ENCODE measurements at regions of chr5 and their contacts with region 1.

Region 1: GRCh38 chr5:126651013-126651577 is 50.3 kb downstream of the PHAX start:
- DNase-seq: no peak
- H3K4me3 ChIP-seq: no peak overlapping the region
- H3K4me3 Mint-ChIP-seq: no peak overlapping the region
- H3K27ac Mint-ChIP-seq: no peak overlapping the region
- H3K4me1 ChIP-seq: peaks cover 21% of the 10 kb centered on the region
- H3K4me1 Mint-ChIP-seq: peaks cover 20% of the 10 kb centered on the region
- H3K27me3 ChIP-seq: no peaks in the 10 kb centered on the region
- H3K27me3 Mint-ChIP-seq: no peaks in the 10 kb centered on the region
- CTCF ChIP-seq: no peak

Region 2: DNA sequence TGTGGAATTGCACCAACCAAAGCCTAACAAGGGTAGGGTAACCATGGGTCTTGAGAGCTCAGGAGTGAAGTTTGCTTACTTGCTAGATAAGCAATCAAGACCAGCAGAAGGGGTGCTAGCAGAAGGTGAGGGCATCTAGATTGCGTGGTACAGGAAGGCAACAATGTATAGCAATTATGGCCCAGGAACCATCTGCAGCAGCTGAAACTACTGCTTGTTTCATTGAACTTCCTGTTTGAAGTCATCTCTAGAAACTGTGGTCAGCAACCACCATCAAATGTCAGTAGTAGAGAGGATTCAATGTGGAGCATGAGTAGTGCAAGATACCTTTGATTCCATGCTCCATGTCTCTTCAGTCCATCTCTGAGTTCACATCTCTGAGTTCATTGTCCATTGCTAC is 689.9 kb before region 1 on chr5:
- CTCF ChIA-PET with region 1: no interaction called
- POLR2A ChIA-PET with region 1: no interaction called
- intact Hi-C with region 1: no loop called
- DNase-seq: no peak
- H3K4me3 ChIP-seq: no peak overlapping the region
- H3K4me3 Mint-ChIP-seq: no peak overlapping the region
- H3K27ac Mint-ChIP-seq: no peak overlapping the region
- H3K4me1 ChIP-seq: no peaks in the 10 kb centered on the region
- H3K4me1 Mint-ChIP-seq: no peaks in the 10 kb centered on the region
- H3K27me3 ChIP-seq: no peaks in the 10 kb centered on the region
- H3K27me3 Mint-ChIP-seq: peaks cover 3% of the 10 kb centered on the region
- CTCF ChIP-seq: no peak

Region 3: DNA sequence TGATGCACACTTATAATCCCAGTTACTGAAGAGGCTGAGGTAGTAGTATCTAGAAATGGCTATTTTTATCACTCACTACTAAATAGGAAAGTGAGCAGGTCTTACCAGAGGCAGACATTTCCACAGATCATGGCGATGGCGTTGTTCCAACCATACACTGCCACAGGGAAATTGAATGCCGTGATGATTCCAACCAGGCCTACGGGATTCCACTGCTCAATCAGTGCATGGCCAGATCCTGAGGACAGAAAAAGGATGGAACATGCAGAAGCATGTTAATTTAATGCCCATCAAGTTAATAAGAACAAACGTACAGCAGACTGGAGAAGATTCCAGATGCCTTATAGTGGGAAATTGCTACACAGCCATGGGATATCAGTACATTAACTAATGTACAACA is 74.1 kb before region 1 on chr5:
- CTCF ChIA-PET with region 1: no interaction called
- POLR2A ChIA-PET with region 1: no interaction called
- intact Hi-C with region 1: no loop called
- DNase-seq: no peak
- H3K4me3 ChIP-seq: no peak overlapping the region
- H3K4me3 Mint-ChIP-seq: no peak overlapping the region
- H3K27ac Mint-ChIP-seq: no peak overlapping the region
- H3K4me1 ChIP-seq: no peaks in the 10 kb centered on the region
- H3K4me1 Mint-ChIP-seq: no peaks in the 10 kb centered on the region
- H3K27me3 ChIP-seq: no peaks in the 10 kb centered on the region
- H3K27me3 Mint-ChIP-seq: no peaks in the 10 kb centered on the region
- CTCF ChIP-seq: no peak

Region 4: GRCh38 chr5:126600631-126601511 is 50.2 kb before region 1 on chr5 and contains the start of gene PHAX:
- CTCF ChIA-PET with region 1: interaction called, 3 read pairs
- POLR2A ChIA-PET with region 1: no interaction called
- intact Hi-C with region 1: loop called (anchors 1 kb)
- DNase-seq: peak; percentile 77 to 89
- H3K4me3 ChIP-seq: peak within 1 kb of the TSS; percentile 100
- H3K4me3 Mint-ChIP-seq: peak within 1 kb of the TSS; percentile 72
- H3K27ac Mint-ChIP-seq: peak within 1 kb of the TSS; percentile 64
- H3K4me1 ChIP-seq: peaks cover 9% of the 10 kb centered on the region; the same call in 1 of the 2 replicates
- H3K4me1 Mint-ChIP-seq: peaks cover 18% of the 10 kb centered on the region
- H3K27me3 ChIP-seq: no peaks in the 10 kb centered on the region
- H3K27me3 Mint-ChIP-seq: no peaks in the 10 kb centered on the region
- CTCF ChIP-seq: peak; percentile 45 to 73
- total RNA-seq, gene PHAX: 38.7 and 41.3 TPM in 2 replicates

Measured in Caco-2 (cell line).